ENCODE measurements at regions of chr6 and their contacts with region 1.

Region 1: DNA sequence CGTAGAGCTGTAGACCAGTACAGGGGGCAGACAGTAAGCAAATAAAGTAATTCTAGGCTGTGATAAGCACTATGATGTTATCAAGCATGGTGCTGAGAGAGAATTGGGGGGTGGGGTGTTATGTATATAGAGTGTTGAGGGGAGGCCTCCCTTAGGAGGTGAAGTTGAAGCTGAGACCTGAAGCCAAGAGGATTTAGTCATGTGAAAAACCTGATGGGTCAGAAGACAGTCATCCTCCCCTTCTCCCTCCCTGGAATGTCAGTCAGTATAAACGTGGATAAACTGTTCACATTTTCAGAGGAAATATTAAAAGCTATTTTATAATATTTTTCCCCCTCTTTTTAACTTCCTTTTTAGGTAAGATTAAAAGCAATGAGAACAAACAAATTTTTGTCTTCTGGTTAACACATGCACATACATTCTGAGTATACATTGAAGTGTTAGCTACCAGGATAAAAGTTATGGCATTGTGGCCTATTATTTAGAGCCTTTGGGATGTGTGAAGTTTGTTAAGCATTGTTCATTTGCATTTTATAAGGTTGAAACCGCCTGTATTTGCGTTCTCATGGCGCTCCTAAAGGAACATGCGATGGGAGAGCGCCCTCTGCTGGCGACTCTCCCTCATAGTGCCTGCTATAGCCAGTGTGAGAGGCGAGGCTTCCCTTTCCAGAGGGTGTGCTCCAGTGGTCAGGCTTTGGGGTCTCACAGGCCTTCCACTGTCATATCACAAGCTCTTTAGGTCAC is 35.4 kb upstream of the MAPK13 start:
- DNase-seq: peak; percentile 82 to 90 (median 84)
- H3K4me3 ChIP-seq: no peak overlapping the region
- H3K27ac ChIP-seq: peak overlapping the region; percentile 1 to 55
- H3K4me1 ChIP-seq: peaks cover 17 to 34% (median 29%) of the 10 kb centered on the region in 4 experiments
- H3K27me3 ChIP-seq: no peaks in the 10 kb centered on the region

Region 2: GRCh38 chr6:36067374-36068011 is 27.4 kb before region 1 on chr6:
- CTCF ChIA-PET with region 1: interaction called, 17 read pairs
- POLR2A ChIA-PET with region 1: no interaction called
- DNase-seq: peak; percentile 37 to 79 (median 60)
- H3K4me3 ChIP-seq: no peak overlapping the region
- H3K27ac ChIP-seq: peak overlapping the region in 1 of 2 experiments; percentile 23
- H3K4me1 ChIP-seq: peaks cover 4 to 36% (median 17%) of the 10 kb centered on the region in 4 experiments
- H3K27me3 ChIP-seq: no peaks in the 10 kb centered on the region

Region 3: GRCh38 chr6:36075656-36076055 is 19.3 kb before region 1 on chr6:
- CTCF ChIA-PET with region 1: interaction called, 50 read pairs
- POLR2A ChIA-PET with region 1: interaction called, 3 read pairs
- DNase-seq: peak; percentile 52 to 65 (median 60)
- H3K4me3 ChIP-seq: no peak overlapping the region
- H3K27ac ChIP-seq: no peak overlapping the region
- H3K4me1 ChIP-seq: peaks cover 0 to 7% (median under 1%) of the 10 kb centered on the region in 4 experiments
- H3K27me3 ChIP-seq: no peaks in the 10 kb centered on the region

Region 4: GRCh38 chr6:36083446-36083845 is 11.5 kb before region 1 on chr6:
- CTCF ChIA-PET with region 1: interaction called, 50 read pairs
- POLR2A ChIA-PET with region 1: no interaction called
- DNase-seq: no peak
- H3K4me3 ChIP-seq: no peak overlapping the region
- H3K27ac ChIP-seq: no peak overlapping the region
- H3K4me1 ChIP-seq: peaks cover 0 to 4% (median 0%) of the 10 kb centered on the region in 4 experiments
- H3K27me3 ChIP-seq: no peaks in the 10 kb centered on the region

Region 5: GRCh38 chr6:36123257-36124139 is 28.6 kb after region 1 on chr6:
- CTCF ChIA-PET with region 1: interaction called, 23 read pairs
- POLR2A ChIA-PET with region 1: no interaction called
- DNase-seq: peak; percentile 85 to 91 (median 88)
- H3K4me3 ChIP-seq: no peak overlapping the region
- H3K27ac ChIP-seq: no peak overlapping the region
- H3K4me1 ChIP-seq: peaks cover 19 to 34% (median 24%) of the 10 kb centered on the region in 4 experiments
- H3K27me3 ChIP-seq: peaks cover 0 to 19% (median 2%) of the 10 kb centered on the region in 5 experiments

Region 6: DNA sequence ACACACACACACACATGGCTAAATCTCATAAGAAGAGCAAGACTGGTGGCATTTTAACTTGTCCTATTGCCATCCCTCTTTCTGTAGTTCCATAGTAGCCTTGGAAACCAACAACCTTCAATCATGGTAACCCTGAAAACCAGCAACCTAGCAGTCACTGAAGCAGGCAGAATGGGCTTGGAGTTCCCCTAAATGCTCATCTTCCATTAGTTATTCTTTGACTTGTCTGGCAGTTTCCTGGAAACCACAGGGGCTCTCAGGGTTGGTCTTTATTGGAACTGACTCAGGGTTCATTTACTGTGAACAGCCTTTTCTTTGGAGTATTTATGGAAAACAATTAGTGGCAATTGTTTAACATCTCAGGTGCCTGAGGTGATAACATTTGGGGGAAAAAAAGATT is 82.2 kb after region 1 on chr6:
- CTCF ChIA-PET with region 1: no interaction called
- POLR2A ChIA-PET with region 1: no interaction called
- DNase-seq: peak in 1 of 3 donors; percentile 7
- H3K4me3 ChIP-seq: no peak overlapping the region
- H3K27ac ChIP-seq: no peak overlapping the region
- H3K4me1 ChIP-seq: no peaks in the 10 kb centered on the region
- H3K27me3 ChIP-seq: no peaks in the 10 kb centered on the region

Measured in common myeloid progenitor, CD34-positive (primary cell).